ENCODE measurements at regions of chr3 and their contacts with region 1.

Region 1: DNA sequence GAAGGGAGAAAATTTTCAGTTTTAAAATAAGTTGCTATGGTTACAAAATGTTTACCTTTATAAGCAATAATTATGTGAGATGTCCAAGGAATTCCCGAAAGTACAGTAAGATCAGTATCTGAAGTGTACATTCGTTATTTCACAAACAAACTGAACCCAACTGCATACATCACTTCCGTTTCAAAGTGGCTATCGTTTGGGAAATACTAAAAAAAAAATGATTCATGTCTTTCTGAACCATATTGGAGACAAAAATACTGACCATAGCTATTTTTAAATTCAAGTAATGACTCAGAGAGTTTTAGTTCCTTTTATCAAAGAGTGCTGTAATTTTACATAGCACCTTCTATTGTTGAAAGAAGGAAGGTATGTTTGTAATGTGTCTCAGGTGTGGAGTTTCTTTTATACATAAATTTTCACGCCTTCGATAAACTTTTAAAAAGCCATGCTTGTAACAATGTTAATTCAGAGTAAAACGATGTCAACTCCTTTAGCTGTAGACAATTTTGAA is 8.0 kb upstream of the ANKRD28 start:
- DNase-seq: no peak
- H3K4me3 ChIP-seq: no peak overlapping the region
- H3K27ac ChIP-seq: no peak overlapping the region
- H3K4me1 ChIP-seq: no peaks in the 10 kb centered on the region
- H3K27me3 ChIP-seq: no peaks in the 10 kb centered on the region
- CTCF ChIP-seq: no peak

Region 2: GRCh38 chr3:15629860-15630597 is 175.8 kb before region 1 on chr3:
- intact Hi-C with region 1: loop called (anchors 5 kb)
- DNase-seq: peak; percentile 71
- H3K4me3 ChIP-seq: peak overlapping the region; percentile 8
- H3K27ac ChIP-seq: peak overlapping the region; percentile 9
- H3K4me1 ChIP-seq: no peaks in the 10 kb centered on the region
- H3K27me3 ChIP-seq: no peaks in the 10 kb centered on the region
- CTCF ChIP-seq: peak; percentile 71